CD14-positive monocyte (primary cell): ENCODE measurements at regions of chr18 and their contacts with region 1.

Region 1: GRCh38 chr18:63930773-63931354 is 18.2 kb upstream of the HMSD start:
- DNase-seq: peak in 2 of 3 donors; percentile 61 to 67
- H3K4me3 ChIP-seq: no peak overlapping the region
- H3K4me3 Mint-ChIP-seq: no peak overlapping the region
- H3K27ac ChIP-seq: peak overlapping the region in 1 of 2 donors; percentile 66
- H3K27ac Mint-ChIP-seq: peak overlapping the region; percentile 67 to 88 (median 81)
- H3K4me1 ChIP-seq: peaks cover 31 to 38% of the 10 kb centered on the region in 2 donors
- H3K4me1 Mint-ChIP-seq: peaks cover 41% of the 10 kb centered on the region
- H3K27me3 ChIP-seq: no peaks in the 10 kb centered on the region
- H3K27me3 Mint-ChIP-seq: peaks cover 0 to 3% (median 0%) of the 10 kb centered on the region in 3 donors
- CTCF ChIP-seq: no peak

Region 2: GRCh38 chr18:63859781-63860475 is 70.9 kb before region 1 on chr18:
- intact Hi-C with region 1: no loop called
- DNase-seq: peak; percentile 62 to 83 (median 76)
- H3K4me3 ChIP-seq: no peak overlapping the region
- H3K4me3 Mint-ChIP-seq: no peak overlapping the region
- H3K27ac ChIP-seq: peak overlapping the region; percentile 60 to 75
- H3K27ac Mint-ChIP-seq: peak overlapping the region; percentile 70 to 88 (median 84)
- H3K4me1 ChIP-seq: peaks cover 27 to 32% of the 10 kb centered on the region in 2 donors
- H3K4me1 Mint-ChIP-seq: peaks cover 29% of the 10 kb centered on the region
- H3K27me3 ChIP-seq: no peaks in the 10 kb centered on the region
- H3K27me3 Mint-ChIP-seq: peaks cover 0 to 2% (median 0%) of the 10 kb centered on the region in 3 donors
- CTCF ChIP-seq: no peak

Region 3: DNA sequence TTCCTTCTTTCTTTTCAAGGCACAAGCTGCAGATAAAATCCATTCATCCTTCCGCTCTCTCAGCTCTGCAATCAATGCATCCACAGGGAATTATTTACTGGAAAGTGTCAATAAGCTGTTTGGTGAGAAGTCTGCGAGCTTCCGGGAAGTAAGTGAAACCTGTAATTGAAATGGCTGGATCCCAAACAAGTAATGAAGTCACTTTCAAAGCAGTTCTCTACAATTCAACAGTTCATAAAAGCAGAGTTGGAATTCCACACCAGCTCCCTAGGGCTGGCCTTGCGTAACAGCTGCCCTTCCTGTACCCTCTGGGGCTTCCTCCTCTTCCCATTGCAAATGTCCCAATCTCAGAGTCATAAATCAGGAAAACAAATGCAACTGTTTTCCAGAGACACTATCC is 33.8 kb before region 1 on chr18:
- intact Hi-C with region 1: loop called (anchors 5 kb)
- DNase-seq: peak in 1 of 3 donors; percentile 44
- H3K4me3 ChIP-seq: no peak overlapping the region
- H3K4me3 Mint-ChIP-seq: no peak overlapping the region
- H3K27ac ChIP-seq: peak overlapping the region in 1 of 2 donors; percentile 12
- H3K27ac Mint-ChIP-seq: peak overlapping the region in 5 of 7 donors; percentile 11 to 70 (median 62)
- H3K4me1 ChIP-seq: peaks cover 54 to 61% of the 10 kb centered on the region in 2 donors
- H3K4me1 Mint-ChIP-seq: peaks cover 80% of the 10 kb centered on the region
- H3K27me3 ChIP-seq: no peaks in the 10 kb centered on the region
- H3K27me3 Mint-ChIP-seq: no peaks in the 10 kb centered on the region
- CTCF ChIP-seq: no peak

Region 4: GRCh38 chr18:63980896-63981460 is 50.1 kb after region 1 on chr18:
- intact Hi-C with region 1: no loop called
- DNase-seq: peak; percentile 46 to 51 (median 49)
- H3K4me3 ChIP-seq: no peak overlapping the region
- H3K4me3 Mint-ChIP-seq: no peak overlapping the region
- H3K27ac ChIP-seq: peak overlapping the region; percentile 43 to 71
- H3K27ac Mint-ChIP-seq: peak overlapping the region; percentile 58 to 91 (median 82)
- H3K4me1 ChIP-seq: peaks cover 63 to 67% of the 10 kb centered on the region in 2 donors
- H3K4me1 Mint-ChIP-seq: peaks cover 64% of the 10 kb centered on the region
- H3K27me3 ChIP-seq: no peaks in the 10 kb centered on the region
- H3K27me3 Mint-ChIP-seq: peaks cover 0 to 2% (median 0%) of the 10 kb centered on the region in 3 donors
- CTCF ChIP-seq: no peak